Heart left ventricle (tissue), 16 donors: ENCODE measurements at regions of chr14 and their contacts with region 1.

Region 1: DNA sequence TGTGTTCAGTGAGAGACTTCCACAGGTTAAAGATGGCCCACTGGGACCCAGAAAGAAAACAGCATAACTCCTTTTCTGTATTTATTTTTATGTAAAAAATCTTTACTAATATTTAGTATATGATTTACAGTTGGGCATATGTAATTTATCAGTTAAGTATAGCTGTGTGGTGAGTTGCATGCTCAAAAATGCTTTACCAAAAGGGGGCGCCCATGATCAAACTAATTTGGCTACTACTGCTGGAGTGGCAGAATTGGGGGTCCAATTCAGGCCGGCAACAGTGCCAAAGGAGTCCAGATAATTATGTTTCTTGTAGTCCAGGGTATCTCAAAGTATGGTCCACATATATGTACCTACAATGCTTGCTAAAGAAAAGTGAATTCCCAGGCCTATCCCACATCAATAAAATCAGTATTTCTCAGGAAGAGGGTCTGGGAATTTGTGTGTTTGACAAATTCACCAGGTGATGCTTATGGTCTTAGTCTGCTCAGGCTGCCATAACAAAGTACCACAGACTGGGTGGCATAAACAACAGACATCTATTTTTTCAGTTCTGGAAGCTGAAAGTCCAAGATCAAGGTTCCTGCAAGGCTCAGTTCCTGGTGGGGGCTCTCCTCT is 152.0 kb downstream of the KTN1 start:
- DNase-seq: peak in 1 of 5 donors; percentile 32
- ATAC-seq: no peak
- H3K4me3 ChIP-seq: no peak overlapping the region
- H3K27ac ChIP-seq: no peak overlapping the region
- H3K4me1 ChIP-seq: no peaks in the 10 kb centered on the region
- H3K27me3 ChIP-seq: no peaks in the 10 kb centered on the region
- CTCF ChIP-seq: peak; percentile 35 to 70 (median 58)
- POLR2A ChIP-seq: no peak

Region 2: DNA sequence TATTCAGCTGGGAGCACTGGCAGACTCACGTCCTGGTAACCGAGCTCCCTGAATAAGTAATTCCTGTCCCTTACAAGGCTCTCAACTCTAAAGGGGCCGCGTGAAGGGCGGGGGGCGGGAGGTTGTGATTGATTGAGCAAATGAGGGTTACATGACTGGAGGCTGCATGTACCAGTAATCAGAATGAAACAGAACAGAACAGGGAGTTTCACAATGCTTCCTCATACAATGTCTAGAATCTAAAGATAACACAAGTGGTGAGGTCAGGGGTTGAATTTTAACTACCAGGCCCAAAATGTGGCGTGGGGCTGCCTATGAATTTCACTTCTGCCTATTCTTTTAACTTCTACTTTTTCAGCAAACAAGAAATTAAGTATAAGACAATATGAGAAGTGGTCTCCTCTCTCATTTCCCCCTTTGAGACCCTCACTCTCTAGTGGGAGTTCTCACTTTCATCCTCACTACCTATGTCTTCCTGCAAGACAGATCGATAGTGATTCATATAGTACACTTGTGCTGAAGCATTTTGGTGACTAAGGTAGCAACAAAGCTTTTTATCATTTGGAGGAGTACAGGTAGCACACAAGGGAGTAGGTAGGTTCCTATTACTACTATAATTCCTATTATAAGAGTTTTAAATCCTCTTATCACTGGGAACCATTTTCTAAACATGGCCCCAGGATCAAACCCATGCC is 87.8 kb after region 1 on chr14:
- intact Hi-C with region 1: no loop called
- DNase-seq: no peak
- ATAC-seq: no peak
- H3K4me3 ChIP-seq: no peak overlapping the region
- H3K27ac ChIP-seq: peak overlapping the region in 1 of 12 donors; percentile 63
- H3K4me1 ChIP-seq: peaks cover 0 to 8% (median 0%) of the 10 kb centered on the region in 12 donors
- H3K27me3 ChIP-seq: no peaks in the 10 kb centered on the region
- CTCF ChIP-seq: no peak
- POLR2A ChIP-seq: no peak

Region 3: DNA sequence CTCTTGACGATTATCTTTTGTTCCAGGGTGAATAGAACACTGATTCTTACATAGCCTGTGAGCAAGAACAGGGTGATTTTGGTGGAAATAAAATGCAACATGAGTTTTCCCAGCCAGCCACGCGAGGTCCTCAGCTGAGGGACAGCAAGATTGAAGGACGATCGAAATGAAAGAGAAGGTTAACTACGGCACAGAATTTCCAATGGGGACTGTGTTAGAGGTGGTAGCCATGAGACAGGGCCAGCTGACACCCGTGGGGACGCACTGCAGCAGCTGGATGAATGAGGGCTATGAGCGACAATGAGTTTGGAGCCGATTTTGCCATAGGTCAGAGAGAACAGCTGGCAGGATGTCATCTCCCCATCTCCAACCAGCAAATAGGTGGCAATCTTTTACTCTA is 142.8 kb after region 1 on chr14:
- intact Hi-C with region 1: no loop called
- DNase-seq: no peak
- ATAC-seq: no peak
- H3K4me3 ChIP-seq: peak overlapping the region in 4 of 12 donors; percentile 17 to 43 (median 24)
- H3K27ac ChIP-seq: no peak overlapping the region
- H3K4me1 ChIP-seq: peaks cover 0 to 11% (median 2%) of the 10 kb centered on the region in 12 donors
- H3K27me3 ChIP-seq: peaks cover 0 to 6% (median 0%) of the 10 kb centered on the region in 9 donors
- CTCF ChIP-seq: peak in 1 of 12 donors; percentile 25
- POLR2A ChIP-seq: no peak

Region 4: DNA sequence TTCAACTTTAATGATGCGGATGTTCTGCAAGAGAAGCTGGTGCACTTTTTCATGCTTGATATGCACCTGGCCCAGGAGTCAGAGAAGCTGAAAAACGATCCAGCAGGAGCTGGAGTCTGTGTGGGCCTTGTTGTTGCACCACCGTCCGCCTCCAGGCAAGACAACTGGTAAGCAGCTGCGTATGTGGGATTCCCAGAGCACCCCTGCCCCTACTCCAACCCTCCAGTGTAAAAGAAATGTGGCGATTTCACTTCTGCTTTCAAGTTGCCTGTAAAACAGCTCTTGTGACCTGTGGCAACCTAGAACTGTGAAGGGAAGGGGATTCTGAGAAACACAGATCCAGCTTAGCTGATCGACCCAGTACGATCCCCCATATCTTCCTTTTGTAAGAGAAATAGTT is 232.1 kb after region 1 on chr14:
- intact Hi-C with region 1: loop called in 1 of 10 experiments (anchors 10 kb)
- DNase-seq: no peak
- ATAC-seq: no peak
- H3K4me3 ChIP-seq: no peak overlapping the region
- H3K27ac ChIP-seq: no peak overlapping the region
- H3K4me1 ChIP-seq: peaks cover 0 to 8% (median 0%) of the 10 kb centered on the region in 12 donors
- H3K27me3 ChIP-seq: no peaks in the 10 kb centered on the region
- CTCF ChIP-seq: no peak
- POLR2A ChIP-seq: no peak

Region 5: GRCh38 chr14:56117765-56118610 is 386.0 kb after region 1 on chr14 and contains the start of gene PELI2:
- intact Hi-C with region 1: loop called in 1 of 10 experiments (anchors 10 kb)
- DNase-seq: peak; percentile 74 to 91 (median 80)
- ATAC-seq: peak; percentile 69 to 87 (median 82)
- H3K4me3 ChIP-seq: peak within 1 kb of the TSS; percentile 57 to 98 (median 82)
- H3K27ac ChIP-seq: peak within 1 kb of the TSS; percentile 59 to 90 (median 86)
- H3K4me1 ChIP-seq: peaks cover 0 to 34% (median 7%) of the 10 kb centered on the region in 12 donors
- H3K27me3 ChIP-seq: no peaks in the 10 kb centered on the region
- CTCF ChIP-seq: peak in 7 of 12 donors; percentile 5 to 32 (median 12)
- POLR2A ChIP-seq: peak in 1 of 2 donors; percentile 60
- total RNA-seq, gene PELI2: 1.1 to 5.2 (median 3.3) TPM

Region 6: GRCh38 chr14:56339855-56340701 is 608.1 kb after region 1 on chr14:
- intact Hi-C with region 1: loop called in 8 of 10 experiments (anchors 2 to 10 kb)
- DNase-seq: peak; percentile 67 to 80 (median 73)
- ATAC-seq: peak; percentile 84 to 95 (median 91)
- H3K4me3 ChIP-seq: no peak overlapping the region
- H3K27ac ChIP-seq: peak overlapping the region in 1 of 12 donors; percentile 8
- H3K4me1 ChIP-seq: peaks cover 0 to 33% (median 21%) of the 10 kb centered on the region in 12 donors
- H3K27me3 ChIP-seq: no peaks in the 10 kb centered on the region
- CTCF ChIP-seq: peak; percentile 65 to 92 (median 82)
- POLR2A ChIP-seq: no peak

Region 7: GRCh38 chr14:56422703-56423213 is 690.8 kb after region 1 on chr14:
- intact Hi-C with region 1: loop called in 1 of 10 experiments (anchors 5 kb)
- DNase-seq: peak in 4 of 5 donors; percentile 45 to 57 (median 48)
- ATAC-seq: peak; percentile 69 to 94 (median 88)
- H3K4me3 ChIP-seq: no peak overlapping the region
- H3K27ac ChIP-seq: no peak overlapping the region
- H3K4me1 ChIP-seq: peaks cover 0 to 20% (median 0%) of the 10 kb centered on the region in 12 donors
- H3K27me3 ChIP-seq: no peaks in the 10 kb centered on the region
- CTCF ChIP-seq: peak; percentile 56 to 80 (median 66)
- POLR2A ChIP-seq: no peak